ENCODE measurements at regions of chr1 and their contacts with region 1.

Region 1: DNA sequence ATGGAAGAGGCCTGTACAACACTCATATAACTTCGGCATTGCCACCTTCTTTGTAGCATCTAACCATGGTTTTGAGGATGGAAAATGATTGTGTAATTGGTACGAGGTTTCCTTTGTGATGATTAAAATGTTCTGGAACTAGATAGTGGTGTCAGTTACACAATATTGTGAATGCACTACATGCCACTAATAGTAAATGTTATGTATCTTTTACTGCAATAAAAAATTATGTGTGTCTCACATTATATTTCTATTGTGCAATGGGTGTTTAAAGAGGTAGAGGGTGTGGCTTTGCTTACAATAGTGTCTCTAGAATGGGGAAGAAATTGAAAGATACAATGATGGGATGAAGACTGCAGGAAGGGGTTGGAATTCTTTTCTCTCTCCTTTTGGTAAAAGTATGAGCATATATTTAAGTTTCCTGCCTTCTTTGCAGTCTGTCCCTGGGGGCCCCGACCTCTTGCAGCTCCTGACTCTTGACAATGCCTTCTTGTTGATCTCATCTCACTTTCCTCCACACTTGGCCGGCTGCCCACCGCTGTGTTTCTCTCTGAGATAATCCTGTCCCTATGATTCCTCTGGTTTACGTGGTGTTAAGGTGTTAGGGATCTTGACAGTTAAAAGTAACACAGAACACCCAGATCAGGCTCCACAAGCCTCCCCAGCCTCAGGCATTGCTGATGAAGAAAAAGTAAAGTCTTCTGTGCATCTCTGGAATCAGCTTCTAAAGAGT is 39.3 kb downstream of the MTARC1 start:
- DNase-seq: no peak
- H3K4me3 ChIP-seq: no peak overlapping the region
- H3K27ac ChIP-seq: no peak overlapping the region
- H3K4me1 ChIP-seq: no peaks in the 10 kb centered on the region; a peak in 1 of 7 replicates
- H3K27me3 ChIP-seq: no peaks in the 10 kb centered on the region
- CTCF ChIP-seq: no peak
- EP300 ChIP-seq: no peak
- POLR2A ChIP-seq: no peak
- RAD21 ChIP-seq: no peak

Region 2: GRCh38 chr1:220717800-220718640 is 108.0 kb before region 1 on chr1:
- CTCF ChIA-PET with region 1: no interaction called
- POLR2A ChIA-PET with region 1: no interaction called
- DNase-seq: no peak
- H3K4me3 ChIP-seq: no peak overlapping the region
- H3K27ac ChIP-seq: no peak overlapping the region
- H3K4me1 ChIP-seq: no peaks in the 10 kb centered on the region
- H3K27me3 ChIP-seq: no peaks in the 10 kb centered on the region
- CTCF ChIP-seq: no peak
- EP300 ChIP-seq: no peak
- POLR2A ChIP-seq: no peak
- RAD21 ChIP-seq: no peak

Region 3: DNA sequence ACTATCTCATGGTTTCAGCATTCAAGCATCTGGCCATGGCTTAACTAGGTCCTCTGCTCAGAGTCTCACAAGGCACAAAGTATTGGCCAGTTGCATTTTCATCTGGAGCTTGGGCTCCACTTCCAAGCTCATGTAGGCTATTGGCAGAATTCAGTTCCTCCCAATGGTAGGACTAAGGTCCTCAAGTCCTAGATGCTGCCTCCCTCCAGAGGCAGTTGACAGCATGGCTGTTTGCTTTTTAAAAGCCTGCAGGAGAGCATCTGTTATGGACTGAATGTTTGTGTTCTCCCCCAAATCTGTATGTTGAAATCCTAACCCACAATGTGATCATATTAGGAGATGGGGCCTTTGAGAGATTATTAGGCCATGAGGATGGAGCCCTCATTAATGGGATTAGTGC is 15.3 kb after region 1 on chr1:
- CTCF ChIA-PET with region 1: interaction called, 12 read pairs
- POLR2A ChIA-PET with region 1: no interaction called
- DNase-seq: no peak
- H3K4me3 ChIP-seq: no peak overlapping the region
- H3K27ac ChIP-seq: no peak overlapping the region
- H3K4me1 ChIP-seq: no peaks in the 10 kb centered on the region
- H3K27me3 ChIP-seq: no peaks in the 10 kb centered on the region
- CTCF ChIP-seq: peak in 2 of 3 experiments; percentile 44 to 49; a peak in 3 of 4 replicates
- EP300 ChIP-seq: no peak
- POLR2A ChIP-seq: no peak
- RAD21 ChIP-seq: peak; percentile 62 to 69

Measured in H1 (cell line).